ENCODE measurements at regions of chr1 and their contacts with region 1.

Region 1: DNA sequence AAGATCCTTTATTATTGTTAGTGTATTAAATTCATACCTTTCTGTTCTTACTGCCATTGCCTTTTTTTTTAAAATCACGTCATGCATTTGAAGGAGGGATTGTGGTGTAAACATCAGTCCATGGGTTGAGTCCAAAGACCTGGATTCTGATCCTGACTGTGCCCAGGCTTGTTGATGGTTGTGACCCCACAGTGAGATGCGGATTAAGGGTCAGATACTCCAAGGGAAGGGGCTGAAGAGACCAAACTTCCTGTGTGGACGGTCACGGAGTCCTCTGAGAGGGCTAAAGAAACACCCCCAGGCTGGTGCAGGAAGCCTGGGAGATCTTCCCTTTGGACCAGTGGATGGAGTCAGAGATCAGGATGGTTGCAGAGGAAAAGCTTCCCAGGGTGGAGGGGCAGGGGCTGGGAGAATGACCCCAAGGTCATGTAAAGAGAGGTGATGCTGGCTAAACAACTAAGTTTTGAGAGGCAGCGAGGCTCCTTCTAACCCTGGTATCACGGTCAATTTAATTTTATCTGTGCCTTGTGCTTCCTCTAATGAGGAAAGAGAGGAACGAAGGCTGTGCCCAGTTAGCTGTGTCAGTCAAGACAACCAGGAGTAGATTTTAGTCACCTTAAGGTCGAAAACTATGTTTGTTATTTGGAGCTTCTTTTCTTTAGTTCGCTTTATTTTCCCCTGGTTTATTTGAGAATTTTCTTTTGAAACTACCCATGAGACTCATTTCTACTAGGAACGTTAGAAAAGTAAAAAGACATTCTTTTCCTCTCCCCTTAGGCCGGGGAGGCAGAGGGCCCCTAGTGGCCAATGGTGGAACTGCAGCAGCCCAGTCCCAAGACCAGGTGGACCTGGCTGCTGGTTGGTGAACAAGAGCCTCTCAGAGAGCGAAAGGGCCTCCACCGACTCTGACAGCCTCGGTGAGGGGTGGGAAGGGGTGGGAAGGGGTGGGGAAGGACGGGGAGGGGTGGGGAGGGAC is 8.7 kb upstream of the GPR161 start:
- DNase-seq: peak; percentile 76 to 100 (median 89)
- ATAC-seq: peak; percentile 98 to 100 (median 100)
- H3K4me3 ChIP-seq: no peak overlapping the region
- H3K27ac ChIP-seq: no peak overlapping the region
- H3K4me1 ChIP-seq: no peaks in the 10 kb centered on the region
- H3K27me3 ChIP-seq: no peaks in the 10 kb centered on the region
- CTCF ChIP-seq: peak; percentile 88 to 96 (median 95)

Region 2: DNA sequence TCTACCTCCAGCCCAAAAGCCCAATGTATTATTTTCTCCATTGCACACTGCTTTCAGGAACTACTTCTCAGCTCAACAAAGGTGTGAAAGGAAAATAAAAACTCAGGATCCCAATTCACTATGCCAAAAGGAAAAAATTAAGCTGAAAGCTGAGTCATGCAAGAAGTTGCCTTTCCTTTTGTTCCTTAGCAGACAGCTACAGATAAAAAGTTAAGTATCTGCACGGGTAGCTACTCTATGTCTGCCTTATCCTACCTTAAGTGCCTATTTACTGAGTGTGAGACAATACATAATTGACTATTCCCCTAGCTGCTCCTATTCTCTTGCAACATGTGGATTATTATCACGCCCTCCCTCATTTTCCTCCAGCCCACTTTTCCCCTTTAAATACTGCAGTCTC is 315.6 kb before region 1 on chr1:
- intact Hi-C with region 1: loop called in 1 of 3 experiments (anchors 5 kb)
- DNase-seq: no peak
- ATAC-seq: no peak
- H3K4me3 ChIP-seq: no peak overlapping the region
- H3K27ac ChIP-seq: no peak overlapping the region
- H3K4me1 ChIP-seq: no peaks in the 10 kb centered on the region
- H3K27me3 ChIP-seq: no peaks in the 10 kb centered on the region
- CTCF ChIP-seq: no peak

Measured in pancreas (tissue), 10 donors.